ENCODE measurements at regions of chr4 and their contacts with region 1.

Region 1: GRCh38 chr4:15956179-15956850 is 6.7 kb downstream of the FGFBP2 start:
- DNase-seq: peak; percentile 78
- CTCF ChIP-seq: peak; percentile 95

Region 2: DNA sequence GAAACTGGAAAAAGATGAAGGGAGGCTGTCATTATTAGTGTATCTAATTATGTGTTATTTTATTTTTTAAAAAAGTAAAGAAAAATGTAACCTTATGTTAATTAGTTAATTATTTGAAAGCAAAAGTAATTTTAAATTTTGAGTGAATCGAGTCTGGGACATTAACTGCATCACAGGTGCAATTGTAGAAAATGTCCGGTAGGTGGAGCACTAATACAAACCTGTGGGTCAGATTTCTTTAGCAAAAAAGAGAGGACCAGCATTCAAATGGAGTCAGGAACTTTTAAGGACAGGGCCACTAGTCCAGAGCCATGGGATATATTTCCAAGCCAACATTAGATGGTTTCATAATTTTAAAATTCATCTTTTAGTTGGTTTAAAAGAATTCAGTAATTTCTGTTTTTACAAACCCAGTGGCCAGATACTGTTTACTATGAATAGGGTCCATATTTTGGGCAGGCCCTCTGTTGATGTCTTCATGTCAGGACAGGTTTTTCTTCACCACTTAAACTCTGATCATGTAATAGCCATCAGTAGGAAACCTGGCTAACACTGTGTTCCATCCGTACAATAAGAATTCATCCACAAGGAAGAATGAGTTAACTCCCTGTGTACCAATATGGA is 226.3 kb before region 1 on chr4:
- in situ Hi-C with region 1: loop called (anchors 25 kb)
- DNase-seq: peak; percentile 63
- CTCF ChIP-seq: peak; percentile 73

Region 3: DNA sequence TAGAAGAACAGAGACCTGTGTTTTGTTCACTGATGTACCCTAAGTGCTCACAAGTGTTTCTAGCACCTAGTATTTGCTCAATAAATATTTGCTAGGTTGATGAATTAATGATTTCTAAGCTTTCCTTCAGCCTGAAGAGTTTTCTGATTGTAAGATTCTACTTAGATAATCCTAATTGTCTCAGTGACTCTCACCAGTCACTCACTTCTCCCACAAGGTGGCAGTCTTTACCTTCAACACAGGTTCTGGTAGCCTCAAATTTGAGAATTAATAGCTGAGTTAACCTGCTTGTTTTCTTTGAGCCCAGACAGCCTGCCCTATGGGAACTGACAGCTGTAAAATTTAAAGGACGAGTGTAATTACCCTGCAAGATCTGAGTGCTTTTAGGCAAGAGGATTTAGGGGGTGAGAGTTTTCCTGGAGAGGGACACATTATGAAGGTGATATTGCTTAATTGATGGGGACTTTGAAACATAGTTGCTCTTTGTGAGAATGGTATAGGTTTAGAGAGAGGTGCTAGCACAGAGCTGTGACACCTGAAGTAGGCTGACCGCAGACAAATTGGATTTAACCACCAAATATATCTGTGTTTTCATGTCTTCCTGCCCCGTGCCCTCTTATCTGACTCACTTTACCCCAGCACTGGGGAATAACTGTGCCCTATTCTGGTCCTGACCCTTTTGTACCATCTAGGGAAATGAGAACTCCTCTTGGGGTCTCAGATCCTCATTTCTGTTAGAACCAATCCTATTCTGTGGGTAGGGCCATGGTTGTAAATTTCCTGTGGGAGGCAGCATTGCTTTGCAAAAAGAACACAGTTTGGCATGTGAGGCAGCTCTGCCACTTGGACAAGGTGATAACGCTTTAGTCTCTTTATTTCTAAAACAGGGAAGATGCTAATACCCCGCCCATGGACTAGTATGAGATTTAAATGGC is 150.5 kb before region 1 on chr4:
- in situ Hi-C with region 1: loop called (anchors 10 kb)
- DNase-seq: peak; percentile 25
- CTCF ChIP-seq: peak; percentile 78

Measured in GM13977 (cell line).